CD8-positive, alpha-beta T cell (primary cell): ENCODE measurements at regions of chrX and their contacts with region 1.

Region 1: GRCh38 chrX:21400408-21401121 is 26.3 kb downstream of the CNKSR2 start:
- DNase-seq: no peak
- ATAC-seq: no peak
- H3K4me3 ChIP-seq: no peak overlapping the region
- H3K4me3 Mint-ChIP-seq: no peak overlapping the region
- H3K27ac ChIP-seq: no peak overlapping the region
- H3K27ac Mint-ChIP-seq: no peak overlapping the region
- H3K4me1 ChIP-seq: peaks cover 2% of the 10 kb centered on the region
- H3K4me1 Mint-ChIP-seq: peaks cover 17% of the 10 kb centered on the region
- H3K27me3 ChIP-seq: no peaks in the 10 kb centered on the region
- H3K27me3 Mint-ChIP-seq: no peaks in the 10 kb centered on the region
- CTCF ChIP-seq: no peak

Region 2: GRCh38 chrX:21014326-21014725 is 386.2 kb before region 1 on chrX:
- CTCF ChIA-PET with region 1: no interaction called
- POLR2A ChIA-PET with region 1: no interaction called
- intact Hi-C with region 1: no loop called
- DNase-seq: no peak
- ATAC-seq: no peak
- H3K4me3 ChIP-seq: no peak overlapping the region
- H3K4me3 Mint-ChIP-seq: no peak overlapping the region
- H3K27ac ChIP-seq: no peak overlapping the region
- H3K27ac Mint-ChIP-seq: no peak overlapping the region
- H3K4me1 ChIP-seq: no peaks in the 10 kb centered on the region
- H3K4me1 Mint-ChIP-seq: no peaks in the 10 kb centered on the region
- H3K27me3 ChIP-seq: no peaks in the 10 kb centered on the region
- H3K27me3 Mint-ChIP-seq: no peaks in the 10 kb centered on the region
- CTCF ChIP-seq: no peak

Region 3: DNA sequence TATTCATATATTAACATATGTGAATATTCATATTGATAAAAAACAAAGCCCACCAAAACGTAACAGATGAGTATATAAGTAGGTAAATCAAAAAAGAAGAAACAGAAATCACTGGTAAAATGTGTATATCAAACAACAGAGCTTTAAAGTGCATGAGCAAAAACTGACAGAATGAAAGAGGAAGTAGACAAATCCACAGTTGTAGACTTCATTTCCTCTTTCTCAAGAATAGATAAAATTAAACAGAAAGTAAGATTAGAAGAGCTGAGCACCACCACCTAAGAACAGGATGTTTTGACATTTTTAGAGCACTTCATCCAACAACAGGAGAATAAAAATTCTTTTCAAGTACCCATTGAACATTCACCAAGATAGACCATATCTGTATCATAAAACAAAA is 38.2 kb after region 1 on chrX:
- CTCF ChIA-PET with region 1: no interaction called
- POLR2A ChIA-PET with region 1: no interaction called
- intact Hi-C with region 1: loop called in 1 of 2 experiments (anchors 5 kb)
- DNase-seq: peak in 2 of 9 experiments; percentile 13 to 54
- ATAC-seq: peak; percentile 90
- H3K4me3 ChIP-seq: no peak overlapping the region
- H3K4me3 Mint-ChIP-seq: peak overlapping the region; percentile 61
- H3K27ac ChIP-seq: peak overlapping the region in 1 of 2 experiments; percentile 58
- H3K27ac Mint-ChIP-seq: peak overlapping the region; percentile 86
- H3K4me1 ChIP-seq: peaks cover 17% of the 10 kb centered on the region
- H3K4me1 Mint-ChIP-seq: peaks cover 29% of the 10 kb centered on the region
- H3K27me3 ChIP-seq: no peaks in the 10 kb centered on the region
- H3K27me3 Mint-ChIP-seq: no peaks in the 10 kb centered on the region
- CTCF ChIP-seq: no peak